ENCODE measurements at regions of chr2 and their contacts with region 1.

Region 1: GRCh38 chr2:186641807-186642321 is 52.0 kb upstream of the FAM171B start:
- DNase-seq: peak; percentile 90
- ATAC-seq: peak; percentile 98
- H3K4me3 ChIP-seq: no peak overlapping the region
- H3K27ac ChIP-seq: no peak overlapping the region
- H3K4me1 ChIP-seq: peaks cover 4% of the 10 kb centered on the region; the same call in 1 of the 2 replicates
- H3K27me3 ChIP-seq: no peaks in the 10 kb centered on the region
- CTCF ChIP-seq: peak; percentile 88

Region 2: DNA sequence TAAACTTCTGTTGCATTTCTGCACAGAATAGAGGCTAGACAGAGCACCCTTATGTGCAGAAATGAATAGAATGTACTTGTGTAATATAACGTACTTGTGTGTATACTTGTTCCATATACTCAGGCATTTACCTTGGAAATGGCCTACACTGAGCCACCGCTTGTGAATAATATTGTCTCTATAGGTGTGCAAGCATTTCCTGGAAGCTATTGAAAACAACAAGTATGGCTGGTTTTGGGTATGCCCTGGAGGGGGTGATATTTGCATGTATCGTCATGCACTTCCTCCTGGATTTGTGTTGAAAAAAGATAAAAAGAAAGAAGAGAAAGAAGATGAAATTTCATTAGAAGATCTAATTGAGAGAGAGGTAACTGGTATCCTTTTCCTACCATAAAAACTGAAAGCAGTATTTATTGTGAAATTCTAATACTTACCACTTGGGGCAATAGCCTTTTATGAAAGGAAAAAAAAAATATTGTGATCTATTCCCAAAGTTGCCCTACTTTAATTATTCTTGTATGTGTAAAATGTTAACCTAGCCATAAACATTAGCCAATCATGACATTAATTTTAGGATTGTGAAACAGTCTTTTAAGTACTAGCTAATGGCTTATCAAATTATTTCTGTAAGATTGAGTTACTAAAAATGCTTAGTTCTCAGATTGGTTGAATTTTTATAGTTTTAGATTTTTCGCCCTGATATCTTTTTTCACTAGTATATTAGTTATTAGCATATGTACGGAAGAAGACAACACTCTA is 137.8 kb before region 1 on chr2:
- CTCF ChIA-PET with region 1: interaction called, 13 read pairs
- POLR2A ChIA-PET with region 1: no interaction called
- intact Hi-C with region 1: loop called (anchors 1 kb)
- DNase-seq: peak; percentile 67
- ATAC-seq: peak; percentile 49
- H3K4me3 ChIP-seq: no peak overlapping the region
- H3K27ac ChIP-seq: no peak overlapping the region
- H3K4me1 ChIP-seq: no peaks in the 10 kb centered on the region
- H3K27me3 ChIP-seq: no peaks in the 10 kb centered on the region
- CTCF ChIP-seq: peak; percentile 77

Region 3: GRCh38 chr2:186544255-186544675 is 97.6 kb before region 1 on chr2:
- CTCF ChIA-PET with region 1: no interaction called
- POLR2A ChIA-PET with region 1: no interaction called
- intact Hi-C with region 1: loop called (anchors 1 kb)
- DNase-seq: peak; percentile 91
- ATAC-seq: peak; percentile 86
- H3K4me3 ChIP-seq: peak overlapping the region; percentile 51
- H3K27ac ChIP-seq: peak overlapping the region; percentile 93
- H3K4me1 ChIP-seq: peaks cover 36% of the 10 kb centered on the region
- H3K27me3 ChIP-seq: no peaks in the 10 kb centered on the region
- CTCF ChIP-seq: no peak

Region 4: GRCh38 chr2:186575302-186575701 is 66.6 kb before region 1 on chr2:
- CTCF ChIA-PET with region 1: interaction called, 3 read pairs
- POLR2A ChIA-PET with region 1: no interaction called
- intact Hi-C with region 1: loop called (anchors 5 kb)
- DNase-seq: peak; percentile 96
- ATAC-seq: peak; percentile 94
- H3K4me3 ChIP-seq: no peak overlapping the region
- H3K27ac ChIP-seq: peak overlapping the region; percentile 13
- H3K4me1 ChIP-seq: peaks cover 48% of the 10 kb centered on the region
- H3K27me3 ChIP-seq: no peaks in the 10 kb centered on the region
- CTCF ChIP-seq: no peak

Region 5: GRCh38 chr2:186589612-186590349 is 52.1 kb before region 1 on chr2 and contains the start of gene ITGAV:
- CTCF ChIA-PET with region 1: interaction called, 4 read pairs
- POLR2A ChIA-PET with region 1: interaction called, 12 read pairs
- intact Hi-C with region 1: loop called (anchors 1 kb)
- DNase-seq: peak; percentile 90
- ATAC-seq: peak; percentile 93
- H3K4me3 ChIP-seq: peak within 1 kb of the TSS; percentile 80
- H3K27ac ChIP-seq: peak within 1 kb of the TSS; percentile 62
- H3K4me1 ChIP-seq: peaks cover 29% of the 10 kb centered on the region
- H3K27me3 ChIP-seq: no peaks in the 10 kb centered on the region
- CTCF ChIP-seq: no peak
- total RNA-seq, gene ITGAV: 23.5 and 25.2 TPM in 2 replicates

Region 6: GRCh38 chr2:186675380-186675779 is 33.5 kb after region 1 on chr2:
- CTCF ChIA-PET with region 1: no interaction called
- POLR2A ChIA-PET with region 1: no interaction called
- intact Hi-C with region 1: no loop called
- DNase-seq: no peak
- ATAC-seq: no peak
- H3K4me3 ChIP-seq: no peak overlapping the region
- H3K27ac ChIP-seq: no peak overlapping the region
- H3K4me1 ChIP-seq: no peaks in the 10 kb centered on the region
- H3K27me3 ChIP-seq: no peaks in the 10 kb centered on the region
- CTCF ChIP-seq: no peak

Region 7: GRCh38 chr2:186780701-186781348 is 139.0 kb after region 1 on chr2:
- CTCF ChIA-PET with region 1: no interaction called
- POLR2A ChIA-PET with region 1: no interaction called
- intact Hi-C with region 1: loop called (anchors 1 kb)
- DNase-seq: peak; percentile 90
- ATAC-seq: peak; percentile 100
- H3K4me3 ChIP-seq: no peak overlapping the region
- H3K27ac ChIP-seq: no peak overlapping the region
- H3K4me1 ChIP-seq: 0 out of 2 replicates have a peak, but pooled peaks cover 3% of the 10 kb centered on the region
- H3K27me3 ChIP-seq: no peaks in the 10 kb centered on the region
- CTCF ChIP-seq: peak; percentile 88

Measured in PC-3 (cell line).